CD4-positive, alpha-beta memory T cell (primary cell): ENCODE measurements at regions of chr3 and their contacts with region 1.

Region 1: GRCh38 chr3:107987036-107987947 is 103.5 kb downstream of the CD47 start:
- DNase-seq: no peak
- H3K4me3 ChIP-seq: no peak overlapping the region
- H3K4me3 Mint-ChIP-seq: peak overlapping the region in 3 of 8 donors; percentile 10 to 29 (median 16)
- H3K27ac ChIP-seq: no peak overlapping the region
- H3K27ac Mint-ChIP-seq: peak overlapping the region in 5 of 7 donors; percentile 17 to 67 (median 60)
- H3K4me1 ChIP-seq: peaks cover 35% of the 10 kb centered on the region
- H3K4me1 Mint-ChIP-seq: peaks cover 28 to 50% (median 39%) of the 10 kb centered on the region in 4 donors
- H3K27me3 ChIP-seq: no peaks in the 10 kb centered on the region
- H3K27me3 Mint-ChIP-seq: no peaks in the 10 kb centered on the region

Region 2: GRCh38 chr3:107953722-107954121 is 33.6 kb before region 1 on chr3:
- CTCF ChIA-PET with region 1: interaction called, 4 read pairs
- POLR2A ChIA-PET with region 1: interaction called, 5 read pairs
- intact Hi-C with region 1: loop called (anchors 5 kb)
- DNase-seq: no peak
- H3K4me3 ChIP-seq: no peak overlapping the region
- H3K4me3 Mint-ChIP-seq: peak overlapping the region in 5 of 8 donors; percentile 8 to 77 (median 55)
- H3K27ac ChIP-seq: no peak overlapping the region
- H3K27ac Mint-ChIP-seq: no peak overlapping the region
- H3K4me1 ChIP-seq: peaks cover 24% of the 10 kb centered on the region
- H3K4me1 Mint-ChIP-seq: peaks cover 25 to 47% (median 28%) of the 10 kb centered on the region in 4 donors
- H3K27me3 ChIP-seq: no peaks in the 10 kb centered on the region
- H3K27me3 Mint-ChIP-seq: no peaks in the 10 kb centered on the region